Dorsolateral prefrontal cortex (tissue), 120 donors: ENCODE measurements at regions of chr10 and their contacts with region 1.

Region 1: DNA sequence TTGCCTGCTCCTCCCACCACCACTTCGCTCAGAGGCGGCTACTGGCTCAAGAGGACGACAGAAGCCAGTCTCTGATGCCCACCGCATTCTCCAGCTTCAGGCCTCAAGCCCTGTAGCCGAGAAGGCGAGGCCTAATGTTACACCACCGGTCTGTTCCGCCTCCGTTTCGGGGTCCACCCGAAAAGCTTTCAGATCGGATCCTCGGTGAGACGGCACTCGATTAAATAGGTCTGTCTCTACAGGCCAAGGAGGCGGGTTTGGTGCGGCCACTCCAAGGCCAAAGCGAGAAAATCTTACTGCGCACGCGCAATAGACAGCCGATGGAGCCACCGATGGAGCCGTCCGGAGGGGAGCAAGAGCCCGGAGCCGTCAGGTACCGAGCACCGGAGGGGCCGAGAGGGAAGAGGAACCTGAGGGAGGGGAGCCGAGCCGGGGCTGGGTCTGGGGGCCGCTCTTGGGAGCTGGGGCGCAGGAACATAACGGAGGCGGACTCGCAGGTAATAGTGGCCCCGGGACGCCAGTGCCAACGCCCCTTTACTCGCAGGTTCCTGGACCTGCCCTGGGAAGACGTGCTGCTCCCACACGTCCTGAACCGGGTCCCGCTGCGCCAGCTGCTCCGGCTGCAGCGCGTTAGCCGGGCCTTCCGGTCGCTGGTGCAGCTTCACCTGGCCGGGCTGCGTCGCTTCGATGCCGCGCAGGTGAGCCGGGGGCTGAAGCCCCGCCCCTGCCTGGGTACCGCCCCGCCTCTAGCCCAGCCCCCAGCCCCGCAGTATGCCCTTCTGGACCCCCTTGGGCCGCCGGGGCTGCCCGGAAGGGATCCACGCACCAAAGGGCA is at the start of gene FBXL15:
- DNase-seq: peak; percentile 88 to 95 (median 92)
- H3K4me3 ChIP-seq: peak within 1 kb of the TSS; percentile 66 to 99 (median 93)
- H3K27ac ChIP-seq: peak within 1 kb of the TSS; percentile 35 to 97 (median 91)
- H3K27me3 ChIP-seq: peaks cover 0 to 14% (median 0%) of the 10 kb centered on the region in 45 donors
- CTCF ChIP-seq: peak in 36 of 56 donors; percentile 5 to 65 (median 30)
- total RNA-seq, gene FBXL15: 13.9 to 50.1 (median 32.5) TPM

Region 2: DNA sequence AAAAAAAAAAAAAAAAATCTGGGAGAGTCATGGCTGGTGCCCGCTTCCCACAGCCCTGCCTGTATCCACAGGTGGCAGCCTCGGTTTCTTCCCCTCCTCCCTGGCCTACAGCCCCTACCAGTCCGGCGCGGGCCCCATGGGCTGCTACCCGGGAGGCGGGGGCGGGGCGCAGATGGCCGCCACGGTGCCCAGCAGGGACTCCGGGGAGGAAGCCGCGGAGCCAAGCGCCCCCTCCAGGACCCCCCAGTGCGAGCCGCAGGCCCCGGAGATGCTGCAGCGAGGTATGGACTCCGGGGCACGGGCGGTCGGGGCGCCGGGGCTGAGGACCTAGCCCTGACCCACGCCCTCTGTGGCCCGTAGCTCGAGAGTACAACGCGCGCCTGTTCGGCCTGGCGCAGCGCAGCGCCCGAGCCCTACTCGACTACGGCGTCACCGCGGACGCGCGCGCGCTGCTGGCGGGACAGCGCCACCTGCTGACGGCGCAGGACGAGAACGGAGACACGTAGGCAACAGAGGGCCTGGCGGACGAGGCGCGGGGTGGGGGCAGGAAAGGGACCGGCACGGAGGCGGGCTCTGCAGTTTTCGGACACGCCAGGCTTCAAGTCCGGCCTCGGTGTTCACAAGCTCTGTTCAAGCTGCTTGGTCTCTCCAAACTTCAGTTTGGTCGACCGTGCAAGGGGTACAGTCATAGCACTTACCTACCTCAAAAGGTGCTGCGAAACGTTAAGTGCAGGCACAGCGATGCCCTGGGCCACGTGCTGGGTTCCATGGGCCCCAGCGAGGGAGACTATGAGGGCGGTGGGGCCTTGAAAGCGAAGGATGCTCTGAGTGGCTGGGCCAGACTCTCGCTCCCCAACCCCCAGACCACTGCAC is 21.6 kb before region 1 on chr10:
- intact Hi-C with region 1: loop called in 1 of 2 experiments (anchors 1 kb)
- DNase-seq: peak; percentile 84 to 94 (median 88)
- H3K4me3 ChIP-seq: peak overlapping the region; percentile 56 to 96 (median 77)
- H3K27ac ChIP-seq: peak overlapping the region; percentile 35 to 96 (median 89)
- H3K27me3 ChIP-seq: peaks cover 0 to 2% (median 0%) of the 10 kb centered on the region in 45 donors
- CTCF ChIP-seq: peak; percentile 82 to 100 (median 97)

Region 3: GRCh38 chr10:102432162-102432950 is 11.3 kb after region 1 on chr10 and contains the start of gene CUEDC2:
- intact Hi-C with region 1: loop called in 1 of 2 experiments (anchors 1 kb)
- DNase-seq: peak; percentile 93 to 98 (median 98)
- H3K4me3 ChIP-seq: peak within 1 kb of the TSS; percentile 67 to 100 (median 95)
- H3K27ac ChIP-seq: peak within 1 kb of the TSS; percentile 17 to 95 (median 86)
- H3K27me3 ChIP-seq: peaks cover 0 to 4% (median 0%) of the 10 kb centered on the region in 45 donors
- CTCF ChIP-seq: peak in 35 of 56 donors; percentile 9 to 61 (median 33)
- total RNA-seq, gene CUEDC2: 53.3 to 107 (median 81.5) TPM

Region 4: DNA sequence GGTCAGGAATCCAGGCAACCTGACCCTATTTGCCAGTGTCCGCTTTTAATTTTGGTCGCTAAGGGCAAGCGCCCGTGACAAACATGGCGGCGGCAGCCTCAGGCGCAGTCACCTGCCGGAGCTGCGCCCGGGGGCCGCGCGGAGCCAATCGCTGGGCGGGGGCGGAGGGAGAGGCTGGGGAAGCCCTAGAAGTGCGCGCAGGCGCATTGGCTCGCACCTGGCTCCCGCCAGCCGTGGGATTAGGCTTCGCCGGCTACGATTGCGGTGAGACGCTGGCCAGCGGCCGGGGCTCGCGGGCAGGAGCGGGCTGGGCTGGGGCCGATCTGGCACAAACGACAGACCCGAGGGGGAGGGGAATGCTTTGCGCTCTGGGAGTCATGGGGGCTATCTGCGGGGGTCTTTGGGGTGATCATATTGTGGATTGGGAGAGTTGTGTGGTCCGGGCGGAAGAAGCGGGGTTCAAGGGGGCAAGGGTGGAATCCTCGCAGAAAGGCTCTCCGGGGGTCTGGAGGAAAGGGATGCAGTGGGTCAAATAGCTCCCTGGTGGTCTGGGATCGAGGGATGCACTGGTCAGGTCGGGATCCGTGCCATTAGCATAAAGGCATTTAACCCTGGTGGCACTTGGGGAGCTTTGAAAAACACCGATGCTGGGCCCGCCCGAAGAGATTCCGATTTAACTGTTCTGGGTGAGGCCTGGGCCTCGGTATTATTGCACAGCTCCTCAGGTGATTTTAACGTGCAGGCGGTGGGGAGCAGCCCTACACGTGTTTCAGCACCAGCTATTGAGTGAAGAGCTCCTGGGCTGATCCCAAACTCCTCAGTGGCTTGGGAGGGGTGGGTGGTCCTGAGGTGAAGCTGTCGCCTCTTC is 40.4 kb after region 1 on chr10:
- intact Hi-C with region 1: loop called (anchors 5 kb)
- DNase-seq: peak; percentile 84 to 96 (median 90)
- H3K4me3 ChIP-seq: peak overlapping the region; percentile 39 to 83 (median 71)
- H3K27ac ChIP-seq: peak overlapping the region in 53 of 59 donors; percentile 7 to 86 (median 66)
- H3K27me3 ChIP-seq: no peaks in the 10 kb centered on the region
- CTCF ChIP-seq: peak in 17 of 56 donors; percentile 6 to 51 (median 28)

Region 5: DNA sequence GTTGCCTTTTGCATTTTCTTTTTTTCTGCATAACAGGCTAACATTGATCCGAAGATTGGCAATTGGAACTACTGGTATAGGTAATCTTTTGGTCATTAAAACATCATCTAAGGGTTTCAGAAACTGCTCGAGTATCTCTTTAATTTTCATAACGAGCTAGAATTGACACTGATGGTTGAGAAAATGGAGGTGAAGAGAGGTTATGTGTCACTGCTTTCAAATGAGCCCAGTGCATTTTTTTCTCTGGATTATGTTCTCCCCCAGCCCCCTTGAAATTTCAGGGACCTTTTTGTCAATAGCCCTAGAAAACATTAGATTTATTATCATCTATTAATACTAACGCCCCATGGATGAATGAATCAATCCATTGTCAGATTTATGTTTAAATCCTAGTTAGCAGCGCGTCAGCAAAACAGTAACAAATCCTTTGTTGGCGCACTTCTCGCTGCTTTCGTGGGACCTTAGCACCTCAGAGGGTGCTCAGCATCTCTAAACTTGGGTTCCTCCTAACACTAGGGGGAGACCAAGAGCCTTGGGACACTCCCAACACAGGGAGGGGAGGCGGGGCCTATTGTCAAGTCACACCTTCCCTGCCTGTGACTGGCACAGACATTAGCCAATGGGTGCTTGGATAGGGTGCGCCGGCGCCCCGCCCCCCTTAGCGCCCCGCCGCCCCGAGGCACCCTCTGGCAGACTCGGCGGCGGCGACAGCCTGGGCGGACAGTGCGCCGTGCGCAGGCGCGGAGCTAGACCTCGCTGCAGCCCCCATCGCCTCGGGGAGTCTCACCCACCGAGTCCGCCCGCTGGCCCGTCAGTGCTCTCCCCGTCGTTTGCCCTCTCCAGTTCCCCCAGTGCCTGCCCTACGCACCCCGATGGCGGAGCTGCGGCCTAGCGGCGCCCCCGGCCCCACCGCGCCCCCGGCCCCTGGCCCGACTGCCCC is 82.5 kb after region 1 on chr10 and contains the start of gene SUFU:
- intact Hi-C with region 1: loop called in 1 of 2 experiments (anchors 2 kb)
- DNase-seq: peak; percentile 96 to 99 (median 99)
- H3K4me3 ChIP-seq: peak within 1 kb of the TSS; percentile 68 to 100 (median 97)
- H3K27ac ChIP-seq: peak within 1 kb of the TSS; percentile 77 to 98 (median 93)
- H3K27me3 ChIP-seq: no peaks in the 10 kb centered on the region
- CTCF ChIP-seq: peak; percentile 88 to 99 (median 95)
- total RNA-seq, gene SUFU: 9.6 to 23.5 (median 14.8) TPM

Region 6: DNA sequence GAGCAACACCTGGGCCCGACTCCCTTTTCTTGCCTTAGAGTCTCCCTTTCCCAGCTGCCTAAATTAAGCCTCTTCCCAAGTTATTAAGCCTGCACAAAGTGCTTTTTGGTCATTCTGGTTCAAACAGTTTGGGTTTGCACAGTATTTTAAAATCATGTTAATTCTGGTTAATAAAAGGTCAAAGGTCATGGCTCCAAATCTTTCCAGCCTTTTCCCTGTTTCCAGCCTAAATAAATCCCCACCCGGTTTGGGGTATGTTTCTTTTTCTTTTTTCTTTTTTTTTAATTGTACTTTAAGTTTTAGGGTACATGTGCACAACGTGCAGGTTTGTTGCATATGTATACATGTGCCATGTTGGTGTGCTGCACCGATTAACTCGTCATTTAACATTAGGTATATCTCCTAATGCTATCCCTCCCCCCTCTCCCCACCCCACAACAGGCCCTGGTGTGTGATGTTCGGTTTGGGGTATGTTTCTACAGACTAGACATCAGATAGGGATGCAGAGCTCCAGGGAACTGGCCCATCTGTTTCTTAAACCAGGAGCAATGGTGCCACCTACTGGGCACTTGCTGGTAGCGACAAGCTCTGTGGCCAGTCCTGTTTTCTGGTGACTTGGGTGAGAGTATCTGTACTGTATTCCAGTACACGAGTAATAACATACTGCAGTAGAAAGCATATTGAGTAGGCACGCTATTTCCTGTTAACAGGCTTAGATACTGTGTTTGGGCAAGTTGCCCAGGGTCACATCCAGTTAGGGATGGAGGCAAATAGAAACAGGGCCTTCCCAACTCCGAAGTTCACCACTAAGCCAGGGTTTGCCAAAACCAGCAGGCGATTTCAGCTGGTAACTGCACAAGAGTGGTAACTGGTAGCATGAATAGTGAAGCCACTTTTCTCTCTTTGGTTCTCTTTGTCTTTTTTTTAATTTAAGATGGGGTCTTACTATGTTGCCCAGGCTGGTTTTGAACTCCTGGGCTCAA is 162.7 kb after region 1 on chr10:
- intact Hi-C with region 1: loop called in 1 of 2 experiments (anchors 5 kb)
- DNase-seq: peak; percentile 83 to 96 (median 90)
- H3K4me3 ChIP-seq: no peak overlapping the region
- H3K27ac ChIP-seq: peak overlapping the region in 6 of 59 donors; percentile 5 to 71 (median 24)
- H3K27me3 ChIP-seq: no peaks in the 10 kb centered on the region
- CTCF ChIP-seq: peak; percentile 68 to 96 (median 90)

Region 7: DNA sequence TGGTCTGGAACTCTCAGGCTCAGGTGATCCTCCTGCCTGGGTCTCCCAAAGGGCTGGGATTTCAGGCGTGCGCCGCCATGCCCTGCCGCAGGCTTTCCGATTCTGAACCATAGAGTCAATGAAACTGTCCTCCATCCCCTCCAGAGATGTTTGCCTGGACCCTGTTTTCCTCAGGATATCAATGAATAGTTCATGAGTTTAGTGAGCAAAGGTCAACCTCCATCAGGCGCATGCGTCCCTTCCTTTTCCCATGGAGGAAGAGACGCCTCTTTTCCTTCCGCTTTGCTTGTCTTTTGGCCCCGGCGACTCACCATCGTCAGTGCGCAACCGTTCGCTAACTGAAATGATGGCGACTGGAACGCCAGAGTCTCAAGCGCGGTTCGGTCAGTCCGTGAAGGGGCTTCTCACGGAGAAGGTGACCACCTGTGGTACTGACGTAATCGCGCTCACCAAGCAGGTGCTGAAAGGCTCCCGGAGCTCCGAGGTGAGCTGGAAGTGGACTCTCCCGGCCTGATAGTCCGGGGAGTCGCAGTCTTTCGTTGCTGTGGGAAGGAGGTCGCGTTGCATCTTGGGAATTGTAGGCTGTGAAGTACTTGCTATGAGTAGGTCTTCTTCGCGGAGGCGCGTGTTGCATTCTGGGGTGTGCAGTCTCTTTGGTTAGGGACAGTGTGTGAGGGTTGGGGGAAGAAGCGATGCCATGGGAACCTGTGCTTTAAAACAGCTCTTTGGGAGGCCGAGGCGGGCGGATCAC is 433.1 kb after region 1 on chr10 and contains the start of gene BORCS7:
- intact Hi-C with region 1: loop called in 1 of 2 experiments (anchors 10 kb)
- DNase-seq: peak; percentile 91 to 100 (median 98)
- H3K4me3 ChIP-seq: peak within 1 kb of the TSS; percentile 57 to 96 (median 83)
- H3K27ac ChIP-seq: peak within 1 kb of the TSS; percentile 74 to 100 (median 98)
- H3K27me3 ChIP-seq: no peaks in the 10 kb centered on the region
- CTCF ChIP-seq: peak in 30 of 56 donors; percentile 4 to 52 (median 26)
- total RNA-seq, gene BORCS7: 13.2 to 36.5 (median 22.8) TPM